Caco-2 (cell line): ENCODE measurements at regions of chr6 and their contacts with region 1.

Region 1: DNA sequence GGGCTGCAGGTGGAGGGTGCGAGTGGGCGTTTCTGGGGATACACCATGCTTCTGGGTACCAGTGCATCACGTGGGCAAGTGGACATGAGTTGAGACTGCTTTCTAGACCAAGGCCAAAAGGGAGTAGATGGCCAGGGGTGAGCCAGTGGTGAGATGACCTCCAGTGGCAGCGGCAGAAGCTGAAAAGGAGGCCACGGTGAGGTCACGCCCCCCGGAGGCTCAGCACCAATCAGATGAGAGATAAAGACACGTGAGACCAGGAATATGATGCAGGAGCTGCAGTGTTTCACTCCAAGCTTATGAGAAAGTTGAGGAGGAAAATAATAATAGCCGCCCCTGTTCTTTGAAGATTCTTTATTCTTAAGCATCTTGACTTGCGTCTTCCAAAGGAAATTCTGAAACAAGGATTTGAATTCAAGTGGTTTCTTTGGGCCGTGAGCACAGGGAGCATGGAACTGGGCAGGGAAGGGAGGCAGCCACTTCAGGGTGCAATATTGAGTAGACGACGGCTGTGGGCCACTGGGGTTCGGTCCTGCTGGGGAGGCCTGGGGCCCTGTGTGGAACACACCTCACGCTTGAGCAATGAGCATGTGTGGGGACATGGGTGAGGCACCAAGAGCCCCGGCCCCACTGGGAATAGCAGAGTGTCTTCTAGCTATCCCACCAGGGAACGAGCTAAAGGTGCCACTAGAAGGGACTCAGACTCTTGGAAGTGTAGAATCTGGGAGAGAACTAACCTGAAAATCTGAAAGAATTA is 156.7 kb upstream of the LRFN2 start:
- DNase-seq: no peak
- H3K4me3 ChIP-seq: no peak overlapping the region
- H3K4me3 Mint-ChIP-seq: no peak overlapping the region
- H3K27ac Mint-ChIP-seq: no peak overlapping the region
- H3K4me1 ChIP-seq: peaks cover 5% of the 10 kb centered on the region; the same call in 1 of the 2 replicates
- H3K4me1 Mint-ChIP-seq: no peaks in the 10 kb centered on the region
- H3K27me3 ChIP-seq: no peaks in the 10 kb centered on the region
- H3K27me3 Mint-ChIP-seq: peaks cover 6% of the 10 kb centered on the region
- CTCF ChIP-seq: no peak

Region 2: GRCh38 chr6:39157511-39157910 is 1586.4 kb before region 1 on chr6:
- CTCF ChIA-PET with region 1: no interaction called
- POLR2A ChIA-PET with region 1: interaction called, 10 read pairs
- intact Hi-C with region 1: no loop called
- DNase-seq: no peak
- H3K4me3 ChIP-seq: no peak overlapping the region
- H3K4me3 Mint-ChIP-seq: no peak overlapping the region
- H3K27ac Mint-ChIP-seq: no peak overlapping the region
- H3K4me1 ChIP-seq: no peaks in the 10 kb centered on the region
- H3K4me1 Mint-ChIP-seq: peaks cover 7% of the 10 kb centered on the region
- H3K27me3 ChIP-seq: no peaks in the 10 kb centered on the region
- H3K27me3 Mint-ChIP-seq: peaks cover under 1% of the 10 kb centered on the region
- CTCF ChIP-seq: no peak

Region 3: DNA sequence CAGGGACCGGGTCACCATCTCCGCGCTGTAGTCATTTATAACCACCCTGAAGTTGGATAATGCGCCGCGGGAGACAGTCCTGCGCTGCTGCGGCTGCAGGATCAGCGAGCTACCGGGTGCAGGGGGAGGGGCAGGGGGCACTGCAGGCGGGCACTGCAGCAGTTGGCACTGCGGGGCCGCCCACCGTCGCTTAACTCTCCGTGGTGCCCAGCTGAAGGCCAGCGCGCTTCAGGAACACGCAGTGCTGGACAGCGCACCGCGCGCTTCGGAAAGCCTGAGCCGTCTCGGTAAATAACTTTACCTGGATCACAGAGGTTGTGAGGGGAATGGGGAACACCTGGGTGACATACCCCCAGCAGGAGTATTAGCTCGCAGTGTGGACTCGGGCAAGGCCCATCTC is 144.3 kb before region 1 on chr6:
- CTCF ChIA-PET with region 1: no interaction called
- POLR2A ChIA-PET with region 1: no interaction called
- intact Hi-C with region 1: no loop called
- DNase-seq: no peak
- H3K4me3 ChIP-seq: no peak overlapping the region
- H3K4me3 Mint-ChIP-seq: no peak overlapping the region
- H3K27ac Mint-ChIP-seq: no peak overlapping the region
- H3K4me1 ChIP-seq: no peaks in the 10 kb centered on the region
- H3K4me1 Mint-ChIP-seq: no peaks in the 10 kb centered on the region
- H3K27me3 ChIP-seq: no peaks in the 10 kb centered on the region; the same call in none of the 2 replicates
- H3K27me3 Mint-ChIP-seq: peaks cover 16% of the 10 kb centered on the region
- CTCF ChIP-seq: no peak

Region 4: DNA sequence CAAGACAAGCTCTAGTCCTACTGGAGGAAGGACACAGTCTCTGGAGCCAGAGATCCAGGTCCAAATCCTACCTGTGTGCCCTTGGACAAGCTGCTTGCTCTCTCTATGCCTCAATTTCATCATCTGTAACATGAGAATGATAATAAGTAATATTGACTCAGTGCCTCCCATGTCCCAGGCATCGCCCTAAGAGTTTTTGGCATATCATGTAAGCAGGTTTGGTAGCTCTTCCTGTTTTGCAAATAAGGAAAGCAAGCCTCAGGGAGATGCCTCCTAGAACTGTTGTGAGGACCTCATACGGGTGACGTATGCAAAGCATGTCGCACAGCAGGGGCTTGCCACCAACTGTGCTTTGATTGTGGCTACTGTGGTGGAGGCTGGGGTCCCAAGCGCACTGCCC is 94.9 kb before region 1 on chr6:
- CTCF ChIA-PET with region 1: no interaction called
- POLR2A ChIA-PET with region 1: no interaction called
- intact Hi-C with region 1: no loop called
- DNase-seq: no peak
- H3K4me3 ChIP-seq: no peak overlapping the region
- H3K4me3 Mint-ChIP-seq: no peak overlapping the region
- H3K27ac Mint-ChIP-seq: no peak overlapping the region
- H3K4me1 ChIP-seq: no peaks in the 10 kb centered on the region
- H3K4me1 Mint-ChIP-seq: no peaks in the 10 kb centered on the region
- H3K27me3 ChIP-seq: peaks cover 4% of the 10 kb centered on the region
- H3K27me3 Mint-ChIP-seq: peaks cover 33% of the 10 kb centered on the region
- CTCF ChIP-seq: no peak

Region 5: GRCh38 chr6:40672097-40672496 is 71.8 kb before region 1 on chr6:
- CTCF ChIA-PET with region 1: no interaction called
- POLR2A ChIA-PET with region 1: no interaction called
- intact Hi-C with region 1: no loop called
- DNase-seq: no peak
- H3K4me3 ChIP-seq: no peak overlapping the region
- H3K4me3 Mint-ChIP-seq: no peak overlapping the region
- H3K27ac Mint-ChIP-seq: no peak overlapping the region
- H3K4me1 ChIP-seq: no peaks in the 10 kb centered on the region; the same call in 1 of the 2 replicates
- H3K4me1 Mint-ChIP-seq: no peaks in the 10 kb centered on the region
- H3K27me3 ChIP-seq: no peaks in the 10 kb centered on the region
- H3K27me3 Mint-ChIP-seq: peaks cover 11% of the 10 kb centered on the region
- CTCF ChIP-seq: no peak

Region 6: DNA sequence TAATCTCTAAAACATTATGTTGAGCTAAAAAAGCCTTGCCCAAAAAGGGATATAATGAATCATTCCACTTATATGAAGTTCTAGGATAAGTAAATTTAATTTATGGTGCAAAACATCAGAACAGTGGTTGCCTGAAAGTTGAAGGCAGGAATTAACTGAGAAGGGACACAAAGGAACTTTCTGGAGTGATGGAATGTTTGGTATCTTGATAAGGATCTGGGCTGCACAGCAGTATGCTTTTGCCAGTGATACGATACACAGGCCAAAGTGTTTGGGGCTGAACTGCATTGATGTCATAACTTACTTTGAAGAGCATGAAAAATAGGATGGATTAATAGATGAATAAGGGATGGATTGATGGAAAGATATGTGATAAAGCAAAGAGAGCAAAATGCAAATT is 10.6 kb before region 1 on chr6:
- CTCF ChIA-PET with region 1: no interaction called
- POLR2A ChIA-PET with region 1: no interaction called
- intact Hi-C with region 1: no loop called
- DNase-seq: peak in 1 of 2 experiments; percentile 28
- H3K4me3 ChIP-seq: no peak overlapping the region
- H3K4me3 Mint-ChIP-seq: no peak overlapping the region
- H3K27ac Mint-ChIP-seq: peak overlapping the region; percentile 20
- H3K4me1 ChIP-seq: peaks cover 16% of the 10 kb centered on the region
- H3K4me1 Mint-ChIP-seq: peaks cover 23% of the 10 kb centered on the region
- H3K27me3 ChIP-seq: no peaks in the 10 kb centered on the region
- H3K27me3 Mint-ChIP-seq: peaks cover under 1% of the 10 kb centered on the region
- CTCF ChIP-seq: no peak